Calu3 (cell line): ENCODE measurements at regions of chr4 and their contacts with region 1.

Region 1: GRCh38 chr4:77652237-77652897 is 46.7 kb downstream of the CXCL13 start:
- DNase-seq: peak; percentile 34
- H3K4me3 Mint-ChIP-seq: no peak overlapping the region
- H3K27ac Mint-ChIP-seq: no peak overlapping the region
- H3K4me1 Mint-ChIP-seq: peaks cover 22% of the 10 kb centered on the region
- H3K27me3 Mint-ChIP-seq: no peaks in the 10 kb centered on the region
- CTCF ChIP-seq: no peak

Region 2: DNA sequence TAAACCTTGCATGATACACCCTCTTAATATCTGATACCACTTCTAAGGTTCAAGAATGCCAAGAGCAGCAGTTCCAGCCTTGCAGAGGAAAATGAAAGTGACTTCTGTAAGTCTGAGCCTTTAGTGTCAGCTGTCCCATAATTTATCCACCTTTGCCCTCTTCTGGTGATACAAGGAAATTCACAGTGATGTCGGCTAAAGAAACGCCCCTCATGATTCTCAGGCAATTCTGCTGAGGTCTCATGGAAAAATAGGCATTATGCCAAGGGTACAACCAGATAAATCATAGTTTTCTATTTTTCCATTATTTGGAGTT is 219.0 kb before region 1 on chr4:
- CTCF ChIA-PET with region 1: no interaction called
- intact Hi-C with region 1: no loop called
- DNase-seq: peak; percentile 20
- H3K4me3 Mint-ChIP-seq: no peak overlapping the region
- H3K27ac Mint-ChIP-seq: no peak overlapping the region
- H3K4me1 Mint-ChIP-seq: no peaks in the 10 kb centered on the region
- H3K27me3 Mint-ChIP-seq: peaks cover 15% of the 10 kb centered on the region
- CTCF ChIP-seq: peak; percentile 17

Region 3: GRCh38 chr4:77697860-77698590 is 45.7 kb after region 1 on chr4:
- CTCF ChIA-PET with region 1: interaction called, 5 read pairs
- intact Hi-C with region 1: loop called (anchors 2 kb)
- DNase-seq: peak; percentile 57
- H3K4me3 Mint-ChIP-seq: peak overlapping the region; percentile 26
- H3K27ac Mint-ChIP-seq: no peak overlapping the region
- H3K4me1 Mint-ChIP-seq: peaks cover 32% of the 10 kb centered on the region
- H3K27me3 Mint-ChIP-seq: no peaks in the 10 kb centered on the region
- CTCF ChIP-seq: peak; percentile 10

Region 4: GRCh38 chr4:77711469-77711868 is 59.1 kb after region 1 on chr4:
- CTCF ChIA-PET with region 1: no interaction called
- intact Hi-C with region 1: no loop called
- DNase-seq: no peak
- H3K4me3 Mint-ChIP-seq: no peak overlapping the region
- H3K27ac Mint-ChIP-seq: no peak overlapping the region
- H3K4me1 Mint-ChIP-seq: peaks cover 12% of the 10 kb centered on the region
- H3K27me3 Mint-ChIP-seq: no peaks in the 10 kb centered on the region
- CTCF ChIP-seq: no peak

Region 5: DNA sequence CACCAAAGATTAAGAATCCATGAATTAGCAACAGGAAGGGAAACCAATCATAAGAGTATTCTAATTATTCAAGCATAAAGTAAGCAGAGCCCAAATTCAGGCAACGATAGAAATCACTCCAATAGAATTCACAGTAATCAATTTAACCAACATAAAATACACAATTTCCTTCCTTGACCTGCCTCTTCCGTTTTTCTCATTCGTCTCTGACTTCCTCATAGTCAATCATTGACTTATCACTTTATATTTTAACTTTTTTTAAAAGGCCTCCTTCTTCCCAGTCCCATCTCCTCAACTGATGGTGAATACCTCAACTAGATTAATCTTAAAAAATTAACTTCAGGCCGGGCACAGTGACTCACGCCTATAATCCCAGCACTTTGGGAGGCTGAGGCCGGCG is 153.4 kb after region 1 on chr4:
- CTCF ChIA-PET with region 1: no interaction called
- intact Hi-C with region 1: loop called (anchors 5 kb)
- DNase-seq: no peak
- H3K4me3 Mint-ChIP-seq: no peak overlapping the region
- H3K27ac Mint-ChIP-seq: no peak overlapping the region
- H3K4me1 Mint-ChIP-seq: no peaks in the 10 kb centered on the region
- H3K27me3 Mint-ChIP-seq: no peaks in the 10 kb centered on the region
- CTCF ChIP-seq: no peak